Endothelial cell of umbilical vein (primary cell): ENCODE measurements at regions of chr2 and their contacts with region 1.

Region 1: DNA sequence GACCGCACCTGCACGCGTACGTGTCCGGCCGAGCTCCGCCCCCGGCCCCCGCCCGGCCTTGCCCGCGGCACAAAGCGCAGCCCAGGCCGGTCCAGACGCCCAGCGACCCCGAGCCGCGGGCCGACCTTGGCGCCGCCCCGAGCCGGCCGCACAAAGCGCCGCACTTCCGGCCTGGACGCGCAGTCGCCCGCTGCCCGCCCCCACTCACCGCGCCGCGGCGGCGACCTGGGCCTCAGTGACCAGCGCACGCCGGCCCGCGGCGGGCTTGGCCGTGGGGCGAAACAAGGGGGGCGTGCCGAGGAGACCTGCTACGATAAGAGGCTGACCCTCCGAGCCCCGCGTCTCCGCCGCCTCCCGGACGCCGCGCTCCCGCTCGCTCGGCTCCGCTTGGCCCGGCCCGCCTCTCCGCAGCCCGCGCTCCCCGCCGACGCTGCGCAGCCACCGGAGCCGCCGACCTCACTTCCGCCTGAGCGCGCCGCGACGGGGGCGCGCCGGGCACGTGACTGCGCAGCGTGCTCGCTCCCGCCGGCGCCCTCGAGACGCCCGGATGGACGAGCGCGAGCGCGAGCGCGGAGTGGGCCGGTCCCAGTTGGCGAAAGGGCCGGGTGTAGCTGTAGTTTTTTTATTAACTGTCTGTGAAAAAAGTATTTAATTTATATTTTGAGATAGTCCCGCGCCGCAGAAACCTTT is at the start of gene FAM168B:
- DNase-seq: peak; percentile 90
- H3K4me3 ChIP-seq: peak within 1 kb of the TSS; percentile 92 to 100 (median 99)
- H3K27ac ChIP-seq: peak within 1 kb of the TSS; percentile 92
- H3K4me1 ChIP-seq: peaks cover 10% of the 10 kb centered on the region
- H3K27me3 ChIP-seq: no peaks in the 10 kb centered on the region
- CTCF ChIP-seq: no peak
- POLR2A ChIP-seq: peak; percentile 68
- total RNA-seq, gene FAM168B: 107 and 109 TPM in 2 replicates

Region 2: GRCh38 chr2:131105156-131105949 is 12.2 kb after region 1 on chr2 and contains the start of gene PLEKHB2:
- CTCF ChIA-PET with region 1: interaction called, 5 read pairs
- POLR2A ChIA-PET with region 1: interaction called, 7 read pairs
- dilution Hi-C with region 1: no loop called
- intact Hi-C with region 1: loop called (anchors 1 kb)
- DNase-seq: peak; percentile 93
- H3K4me3 ChIP-seq: peak within 1 kb of the TSS; percentile 86 to 99 (median 98)
- H3K27ac ChIP-seq: peak within 1 kb of the TSS; percentile 86
- H3K4me1 ChIP-seq: peaks cover 21% of the 10 kb centered on the region
- H3K27me3 ChIP-seq: no peaks in the 10 kb centered on the region
- CTCF ChIP-seq: peak in 1 of 2 donors; percentile 30
- POLR2A ChIP-seq: peak; percentile 93
- total RNA-seq, gene PLEKHB2: 56.5 and 56.9 TPM in 2 replicates